ENCODE measurements at regions of chr11 and their contacts with region 1.

Region 1: DNA sequence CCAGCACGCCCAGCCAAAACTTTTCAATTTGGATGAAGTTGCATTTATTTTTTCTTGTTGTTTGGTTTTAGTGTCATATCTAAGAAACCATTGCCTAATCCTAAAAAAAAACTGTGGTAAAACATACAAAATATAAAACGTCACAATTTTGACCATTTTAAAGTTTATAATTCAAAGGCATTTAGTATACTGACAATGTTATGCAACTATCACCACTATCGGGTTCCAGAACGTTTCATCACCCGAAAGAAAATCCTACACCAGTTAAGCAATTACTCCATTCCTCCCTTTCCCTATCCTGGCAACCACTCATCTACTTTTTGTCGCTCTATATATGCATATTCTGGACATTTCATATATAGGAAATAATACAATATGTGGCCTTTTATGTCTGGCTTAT is 30.5 kb upstream of the PHOX2A start:
- DNase-seq: no peak
- ATAC-seq: no peak
- H3K4me3 ChIP-seq: no peak overlapping the region
- H3K27ac ChIP-seq: no peak overlapping the region
- H3K4me1 ChIP-seq: no peaks in the 10 kb centered on the region
- H3K27me3 ChIP-seq: peaks cover 3% of the 10 kb centered on the region; the same call in 1 of the 2 replicates
- CTCF ChIP-seq: no peak

Region 2: GRCh38 chr11:71999362-71999761 is 275.1 kb before region 1 on chr11:
- CTCF ChIA-PET with region 1: no interaction called
- POLR2A ChIA-PET with region 1: no interaction called
- in situ Hi-C with region 1: no loop called
- intact Hi-C with region 1: no loop called
- DNase-seq: no peak
- ATAC-seq: no peak
- H3K4me3 ChIP-seq: no peak overlapping the region
- H3K27ac ChIP-seq: no peak overlapping the region
- H3K4me1 ChIP-seq: no peaks in the 10 kb centered on the region
- H3K27me3 ChIP-seq: no peaks in the 10 kb centered on the region
- CTCF ChIP-seq: no peak

Region 3: GRCh38 chr11:72352859-72353551 is 78.6 kb after region 1 on chr11:
- CTCF ChIA-PET with region 1: interaction called, 5 read pairs
- POLR2A ChIA-PET with region 1: interaction called, 10 read pairs
- in situ Hi-C with region 1: no loop called
- intact Hi-C with region 1: no loop called
- DNase-seq: no peak
- ATAC-seq: no peak
- H3K4me3 ChIP-seq: no peak overlapping the region
- H3K27ac ChIP-seq: no peak overlapping the region
- H3K4me1 ChIP-seq: no peaks in the 10 kb centered on the region
- H3K27me3 ChIP-seq: no peaks in the 10 kb centered on the region
- CTCF ChIP-seq: no peak

Region 4: DNA sequence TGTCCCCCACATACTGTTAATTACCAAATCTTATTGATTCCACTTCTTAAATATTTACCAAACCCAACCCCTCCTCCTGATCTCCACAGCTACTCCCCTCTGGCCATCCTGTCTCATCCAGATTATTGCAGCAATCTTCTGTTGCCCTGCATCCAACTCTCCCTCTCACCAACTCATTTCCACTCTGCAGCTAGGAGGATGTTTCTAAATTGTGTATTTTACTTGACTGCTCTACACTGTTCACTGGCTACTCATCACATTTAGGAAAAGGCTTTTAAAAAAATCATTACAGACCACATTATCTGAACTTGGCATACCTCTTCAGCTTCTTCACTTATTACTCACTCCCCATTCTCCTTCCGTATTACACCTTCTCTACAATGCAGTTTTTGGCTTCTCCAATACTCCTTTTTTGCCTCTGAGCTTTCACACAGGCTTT is 657.7 kb after region 1 on chr11:
- CTCF ChIA-PET with region 1: no interaction called
- POLR2A ChIA-PET with region 1: no interaction called
- in situ Hi-C with region 1: no loop called
- intact Hi-C with region 1: no loop called
- DNase-seq: no peak
- ATAC-seq: no peak
- H3K4me3 ChIP-seq: no peak overlapping the region
- H3K27ac ChIP-seq: no peak overlapping the region
- H3K4me1 ChIP-seq: no peaks in the 10 kb centered on the region
- H3K27me3 ChIP-seq: no peaks in the 10 kb centered on the region
- CTCF ChIP-seq: no peak

Measured in Panc1 (cell line).